Activated CD4-positive, alpha-beta memory T cell treated with anti-CD3 and anti-CD28 coated beads, Interleukin-2, amount 10 ng/mL, durations not matched to agents 7 days and 5 days (primary cell): ENCODE measurements at regions of chr6 and their contacts with region 1.

Region 1: DNA sequence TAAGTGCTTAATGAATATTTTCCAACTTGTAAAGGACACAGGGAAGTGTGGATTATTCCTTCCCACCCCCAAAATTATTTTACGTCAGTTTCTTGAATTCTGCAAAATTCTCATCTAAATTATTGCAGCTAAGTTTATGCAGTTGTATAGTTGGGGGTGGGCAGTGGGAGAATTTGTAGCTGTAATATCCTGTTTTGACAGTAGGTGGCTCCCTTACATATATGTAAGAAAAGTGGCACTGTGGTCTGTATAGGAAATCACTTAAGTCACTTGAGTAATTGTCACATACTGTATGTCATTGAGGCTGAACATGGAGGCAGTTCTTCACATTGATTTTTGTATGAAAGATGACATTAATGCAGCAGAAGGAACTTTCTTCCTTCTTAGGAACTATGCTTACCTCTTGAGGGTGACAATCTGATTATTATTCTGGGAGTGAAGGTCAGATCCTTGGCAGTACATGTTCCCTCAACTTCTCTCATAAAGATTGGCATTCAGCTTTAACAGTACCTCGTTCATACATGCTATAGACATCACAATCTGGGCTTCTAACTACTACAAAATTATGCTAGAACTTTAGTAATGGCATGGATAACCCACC is 14.7 kb upstream of the CFAP206 start:
- DNase-seq: peak; percentile 37
- H3K4me3 Mint-ChIP-seq: no peak overlapping the region
- H3K27ac Mint-ChIP-seq: no peak overlapping the region
- H3K4me1 Mint-ChIP-seq: peaks cover 1% of the 10 kb centered on the region
- H3K27me3 Mint-ChIP-seq: no peaks in the 10 kb centered on the region

Region 2: GRCh38 chr6:87139236-87139635 is 253.9 kb before region 1 on chr6:
- CTCF ChIA-PET with region 1: interaction called, 12 read pairs
- POLR2A ChIA-PET with region 1: no interaction called
- DNase-seq: peak; percentile 38
- H3K4me3 Mint-ChIP-seq: no peak overlapping the region
- H3K27ac Mint-ChIP-seq: no peak overlapping the region
- H3K4me1 Mint-ChIP-seq: peaks cover 1% of the 10 kb centered on the region
- H3K27me3 Mint-ChIP-seq: peaks cover 36% of the 10 kb centered on the region